ENCODE measurements at regions of chr17 and their contacts with region 1.

Region 1: DNA sequence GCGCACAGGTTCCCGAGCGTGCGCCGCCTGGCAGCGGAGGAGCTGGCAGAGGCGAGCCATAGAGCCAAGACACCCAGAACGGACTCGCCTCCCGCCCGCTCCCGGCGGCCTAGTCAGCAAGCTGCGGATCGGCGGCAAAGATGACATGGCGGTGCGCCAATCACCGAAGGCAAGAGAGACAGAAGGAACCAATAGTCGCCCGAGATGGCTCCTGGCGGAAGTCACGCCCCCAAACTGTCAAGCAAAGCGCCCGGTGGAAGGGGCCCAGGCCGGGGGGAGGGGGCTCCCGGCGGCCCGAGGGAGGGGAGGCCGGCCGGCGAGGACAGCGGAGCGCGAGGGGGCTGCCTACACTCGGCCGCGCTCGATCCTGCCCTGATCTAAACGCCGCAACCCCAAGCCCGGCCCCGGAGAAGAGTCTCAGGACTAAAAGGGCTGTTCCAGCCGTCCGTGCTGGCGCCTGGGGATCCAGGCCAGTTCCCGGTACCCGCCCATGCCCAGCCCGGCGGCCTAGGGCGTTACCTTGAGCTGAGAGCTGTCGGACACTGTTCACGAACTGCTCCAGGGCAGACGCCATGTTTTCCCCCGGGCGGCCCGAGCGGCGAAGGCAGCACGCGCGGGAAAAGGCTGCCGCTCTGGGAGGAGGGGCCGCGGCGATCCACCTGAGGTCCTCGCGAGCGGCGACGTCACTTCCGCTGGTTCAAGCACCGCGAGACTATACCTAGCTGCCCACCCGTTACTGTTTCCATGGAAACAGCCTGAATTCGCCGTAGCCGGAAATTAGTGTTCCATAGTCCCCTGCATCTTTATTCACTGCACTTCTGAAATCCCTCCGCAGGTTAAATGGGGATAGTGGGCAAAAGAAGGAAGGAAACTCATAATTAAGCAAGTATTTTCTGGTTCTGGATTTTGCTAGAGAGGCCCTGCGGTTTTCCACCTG is at the start of gene COPS3:
- DNase-seq: peak; percentile 99
- H3K4me3 Mint-ChIP-seq: peak within 1 kb of the TSS; percentile 97
- H3K27ac Mint-ChIP-seq: peak within 1 kb of the TSS; percentile 93
- H3K4me1 Mint-ChIP-seq: peaks cover 33% of the 10 kb centered on the region
- H3K27me3 Mint-ChIP-seq: peaks cover 2% of the 10 kb centered on the region
- total RNA-seq, gene COPS3: 125 and 133 TPM in 2 replicates

Region 2: DNA sequence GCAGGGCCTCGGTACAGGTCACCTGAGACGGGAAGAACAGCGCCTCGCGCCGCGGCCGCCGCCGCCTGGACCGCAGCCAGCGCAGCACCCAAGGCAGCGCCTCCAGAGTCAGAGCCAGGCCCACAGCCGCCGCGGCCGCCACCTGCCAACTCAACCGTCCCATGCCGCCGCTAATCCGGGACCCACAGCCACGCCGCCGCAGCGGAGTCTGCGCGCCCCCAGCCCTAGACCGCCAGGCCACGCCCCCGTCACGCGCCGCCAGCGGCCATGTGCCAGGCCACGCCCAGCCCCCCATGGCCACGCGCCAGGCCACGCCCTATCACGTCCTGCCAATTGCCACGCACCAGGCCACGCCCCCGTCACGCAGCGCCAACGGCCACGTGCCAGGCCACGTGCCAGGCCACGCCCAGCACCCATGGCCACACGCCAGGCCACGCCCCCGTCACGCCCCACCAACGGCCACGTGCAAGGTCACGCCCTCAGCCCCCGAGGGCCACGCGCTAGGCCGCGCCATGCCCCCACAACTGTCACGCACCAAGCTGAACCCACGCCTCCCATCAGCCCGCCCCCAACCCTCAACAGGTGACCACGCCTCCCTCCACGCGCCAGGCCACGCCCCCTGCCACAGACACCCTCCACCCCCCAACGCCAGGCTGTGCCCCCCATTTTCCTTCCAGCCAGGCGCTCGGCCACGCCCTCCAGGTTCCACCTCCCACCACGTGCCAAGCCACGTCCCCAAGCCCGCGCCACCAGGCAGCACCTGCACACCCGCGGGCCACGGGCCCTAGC is 74.6 kb before region 1 on chr17 and contains the start of gene PLD6:
- intact Hi-C with region 1: loop called (anchors 5 kb)
- DNase-seq: peak; percentile 96
- H3K4me3 Mint-ChIP-seq: peak within 1 kb of the TSS; percentile 90
- H3K27ac Mint-ChIP-seq: peak within 1 kb of the TSS; percentile 96
- H3K4me1 Mint-ChIP-seq: peaks cover 11% of the 10 kb centered on the region
- H3K27me3 Mint-ChIP-seq: no peaks in the 10 kb centered on the region
- total RNA-seq, gene PLD6: 17.2 and 17.3 TPM in 2 replicates

Region 3: GRCh38 chr17:17303010-17303846 is 22.3 kb after region 1 on chr17 and contains the start of gene NT5M:
- intact Hi-C with region 1: loop called (anchors 1 kb)
- DNase-seq: peak; percentile 94
- H3K4me3 Mint-ChIP-seq: peak within 1 kb of the TSS; percentile 89
- H3K27ac Mint-ChIP-seq: peak within 1 kb of the TSS; percentile 92
- H3K4me1 Mint-ChIP-seq: peaks cover 30% of the 10 kb centered on the region
- H3K27me3 Mint-ChIP-seq: no peaks in the 10 kb centered on the region
- total RNA-seq, gene NT5M: 7.1 and 8.1 TPM in 2 replicates

Measured in activated CD4-positive, alpha-beta T cell treated with anti-CD3 and anti-CD28 coated beads, Interleukin-2, amount 10 ng/mL, durations not matched to agents 24 days and 14 days (primary cell).